CD8-positive, alpha-beta T cell (primary cell): ENCODE measurements at regions of chr20 and their contacts with region 1.

Region 1: DNA sequence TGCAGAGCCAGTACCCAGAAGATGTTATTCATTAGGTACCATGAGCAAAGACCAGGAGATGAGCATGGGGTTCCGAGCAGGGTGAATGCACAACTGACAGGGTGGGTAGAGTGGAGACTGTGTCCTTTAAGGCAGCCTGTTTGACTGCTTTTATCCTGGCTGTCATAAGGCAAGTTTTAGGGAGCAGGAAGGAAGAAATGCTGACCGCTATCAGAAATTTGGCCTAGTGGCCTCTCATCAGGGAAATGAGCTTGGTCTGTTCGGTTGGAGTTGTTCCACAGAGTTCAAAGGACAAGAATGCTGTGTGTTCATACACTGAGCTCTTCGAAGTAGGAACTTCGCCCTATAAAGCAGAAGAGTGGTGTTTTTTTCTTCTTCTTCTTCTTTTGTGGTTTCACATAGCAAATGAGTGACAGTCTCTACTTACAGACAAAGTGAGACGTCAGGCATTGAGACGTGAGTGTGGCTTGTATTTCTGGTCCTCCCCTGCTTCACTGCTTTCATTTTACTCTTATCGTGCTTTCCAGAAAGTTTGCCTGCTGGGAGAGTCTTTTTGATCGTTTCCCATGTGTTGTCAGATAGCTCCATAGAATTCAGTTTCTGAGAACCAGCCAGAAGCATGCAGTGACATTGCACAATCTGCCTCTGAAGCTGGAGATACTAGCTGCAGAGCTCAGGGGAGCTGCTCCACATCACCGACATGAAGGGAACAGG is at the start of gene CASS4:
- DNase-seq: peak in 6 of 9 experiments; percentile 39 to 82 (median 61)
- ATAC-seq: peak; percentile 80
- H3K4me3 ChIP-seq: peak within 1 kb of the TSS; percentile 58 to 74
- H3K4me3 Mint-ChIP-seq: peak within 1 kb of the TSS; percentile 93
- H3K27ac ChIP-seq: peak within 1 kb of the TSS; percentile 71 to 80
- H3K27ac Mint-ChIP-seq: peak within 1 kb of the TSS; percentile 98
- H3K4me1 ChIP-seq: peaks cover 56% of the 10 kb centered on the region
- H3K4me1 Mint-ChIP-seq: peaks cover 50% of the 10 kb centered on the region
- H3K27me3 ChIP-seq: no peaks in the 10 kb centered on the region
- H3K27me3 Mint-ChIP-seq: no peaks in the 10 kb centered on the region
- CTCF ChIP-seq: no peak
- total RNA-seq, gene CASS4: 23.5 to 26.0 TPM

Region 2: DNA sequence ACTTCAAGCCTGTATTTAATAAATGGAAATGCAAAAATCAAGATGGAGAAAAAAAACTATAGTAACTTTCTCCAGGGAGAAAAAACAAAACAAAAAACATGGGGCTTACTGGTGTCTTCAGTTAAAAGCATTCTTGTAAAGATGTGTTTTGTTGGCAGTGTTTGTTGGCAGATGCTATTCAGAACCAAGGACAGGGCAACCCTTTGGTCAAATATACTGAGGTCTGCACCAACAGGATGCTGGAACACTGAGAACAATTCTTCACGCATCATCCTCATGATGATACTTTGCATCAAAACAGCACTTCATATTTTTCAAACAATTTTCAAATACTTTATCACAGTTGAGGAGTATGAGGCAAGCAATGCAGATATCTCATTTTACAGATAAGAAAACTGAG is 342.9 kb before region 1 on chr20:
- CTCF ChIA-PET with region 1: no interaction called
- POLR2A ChIA-PET with region 1: no interaction called
- intact Hi-C with region 1: no loop called
- DNase-seq: no peak
- ATAC-seq: no peak
- H3K4me3 ChIP-seq: no peak overlapping the region
- H3K4me3 Mint-ChIP-seq: no peak overlapping the region
- H3K27ac ChIP-seq: no peak overlapping the region
- H3K27ac Mint-ChIP-seq: no peak overlapping the region
- H3K4me1 ChIP-seq: no peaks in the 10 kb centered on the region
- H3K4me1 Mint-ChIP-seq: no peaks in the 10 kb centered on the region
- H3K27me3 ChIP-seq: no peaks in the 10 kb centered on the region
- H3K27me3 Mint-ChIP-seq: no peaks in the 10 kb centered on the region
- CTCF ChIP-seq: no peak

Region 3: GRCh38 chr20:56392282-56393137 is 19.4 kb before region 1 on chr20 and contains the start of gene CSTF1:
- CTCF ChIA-PET with region 1: interaction called, 9 read pairs
- POLR2A ChIA-PET with region 1: interaction called, 14 read pairs
- intact Hi-C with region 1: loop called in 1 of 2 experiments (anchors 2 kb)
- DNase-seq: peak; percentile 98 to 99 (median 99)
- ATAC-seq: peak; percentile 84
- H3K4me3 ChIP-seq: peak within 1 kb of the TSS; percentile 91
- H3K4me3 Mint-ChIP-seq: no peak within 1 kb of the TSS
- H3K27ac ChIP-seq: peak within 1 kb of the TSS; percentile 95 to 97
- H3K27ac Mint-ChIP-seq: no peak within 1 kb of the TSS
- H3K4me1 ChIP-seq: peaks cover 17% of the 10 kb centered on the region
- H3K4me1 Mint-ChIP-seq: peaks cover 27% of the 10 kb centered on the region
- H3K27me3 ChIP-seq: no peaks in the 10 kb centered on the region
- H3K27me3 Mint-ChIP-seq: no peaks in the 10 kb centered on the region
- CTCF ChIP-seq: no peak
- total RNA-seq, gene CSTF1: 20.7 to 26.0 TPM

Region 4: DNA sequence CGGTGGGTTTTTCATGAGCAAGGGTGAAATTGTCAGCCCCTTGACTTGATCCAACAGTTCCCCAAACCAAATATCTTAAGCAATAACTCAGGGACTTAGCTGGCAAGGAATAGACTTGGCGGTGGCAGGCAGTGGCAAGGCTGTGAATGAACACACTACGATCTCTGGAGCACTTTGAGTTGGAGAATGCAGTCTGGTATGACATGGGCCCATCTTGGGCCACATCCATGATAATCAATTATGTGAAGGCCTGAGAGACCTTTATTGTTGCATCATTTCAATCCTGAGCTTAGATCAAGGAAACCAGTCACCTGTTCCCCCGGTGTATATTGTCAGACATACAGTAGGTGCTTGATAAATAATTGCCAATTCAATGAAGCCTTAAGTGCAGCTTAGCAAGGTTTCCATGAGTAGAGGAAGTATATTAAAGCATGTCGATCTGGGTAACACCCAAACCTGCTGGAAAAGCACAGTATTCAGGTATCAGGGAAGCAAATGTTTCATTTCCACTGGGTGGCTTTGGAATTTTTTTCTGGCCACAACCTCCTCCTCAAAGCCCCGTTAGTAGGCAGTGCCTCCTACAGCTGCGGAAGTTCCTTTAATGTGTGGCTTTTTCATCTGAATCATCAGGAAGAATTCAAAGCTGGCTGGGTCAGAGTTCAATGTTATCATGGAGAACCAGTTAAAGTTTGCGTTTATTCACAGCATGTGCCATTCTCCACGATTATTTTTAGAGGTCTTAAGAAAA is 10.3 kb after region 1 on chr20:
- CTCF ChIA-PET with region 1: interaction called, 8 read pairs
- POLR2A ChIA-PET with region 1: interaction called, 19 read pairs
- intact Hi-C with region 1: no loop called
- DNase-seq: peak in 1 of 9 experiments; percentile 34
- ATAC-seq: no peak
- H3K4me3 ChIP-seq: no peak overlapping the region
- H3K4me3 Mint-ChIP-seq: peak overlapping the region; percentile 46
- H3K27ac ChIP-seq: no peak overlapping the region
- H3K27ac Mint-ChIP-seq: peak overlapping the region; percentile 56
- H3K4me1 ChIP-seq: peaks cover 58% of the 10 kb centered on the region
- H3K4me1 Mint-ChIP-seq: peaks cover 63% of the 10 kb centered on the region
- H3K27me3 ChIP-seq: no peaks in the 10 kb centered on the region
- H3K27me3 Mint-ChIP-seq: no peaks in the 10 kb centered on the region
- CTCF ChIP-seq: no peak

Region 5: DNA sequence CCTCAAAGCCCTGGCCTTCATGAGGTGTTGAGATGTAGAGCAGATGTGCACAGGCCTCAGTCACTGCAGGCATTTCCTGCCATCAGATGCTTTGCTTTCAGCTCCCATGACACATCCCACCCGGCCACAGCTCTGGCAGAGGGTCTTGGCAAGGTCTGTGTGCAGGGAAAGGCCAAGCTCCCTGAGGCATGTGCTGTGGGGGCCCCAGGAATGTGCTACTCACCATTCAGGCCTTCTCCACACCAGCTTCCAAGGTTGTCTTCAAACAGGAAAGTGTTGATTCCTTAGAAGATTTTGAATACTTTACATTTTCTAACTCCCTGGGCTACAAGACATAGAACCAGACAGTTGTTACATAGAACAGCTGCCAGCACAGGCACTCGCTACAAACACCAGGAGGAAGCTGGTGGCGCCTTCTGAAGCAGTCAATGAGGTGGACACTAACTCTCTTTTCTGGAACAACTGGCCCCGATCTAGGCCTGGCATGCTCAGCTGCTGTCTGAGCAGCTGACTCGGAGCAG is 27.9 kb after region 1 on chr20:
- CTCF ChIA-PET with region 1: interaction called, 3 read pairs
- POLR2A ChIA-PET with region 1: interaction called, 10 read pairs
- intact Hi-C with region 1: no loop called
- DNase-seq: peak in 3 of 9 experiments; percentile 23 to 54 (median 48)
- ATAC-seq: peak; percentile 43
- H3K4me3 ChIP-seq: no peak overlapping the region
- H3K4me3 Mint-ChIP-seq: peak overlapping the region; percentile 60
- H3K27ac ChIP-seq: peak overlapping the region; percentile 16 to 39
- H3K27ac Mint-ChIP-seq: peak overlapping the region; percentile 83
- H3K4me1 ChIP-seq: peaks cover 52% of the 10 kb centered on the region
- H3K4me1 Mint-ChIP-seq: peaks cover 61% of the 10 kb centered on the region
- H3K27me3 ChIP-seq: no peaks in the 10 kb centered on the region
- H3K27me3 Mint-ChIP-seq: no peaks in the 10 kb centered on the region
- CTCF ChIP-seq: no peak

Region 6: GRCh38 chr20:57718490-57719271 is 1306.8 kb after region 1 on chr20:
- CTCF ChIA-PET with region 1: no interaction called
- POLR2A ChIA-PET with region 1: no interaction called
- intact Hi-C with region 1: loop called in 1 of 2 experiments (anchors 10 kb)
- DNase-seq: peak; percentile 78 to 96 (median 90)
- ATAC-seq: peak; percentile 97
- H3K4me3 ChIP-seq: peak overlapping the region; percentile 37 to 55
- H3K4me3 Mint-ChIP-seq: peak overlapping the region; percentile 69
- H3K27ac ChIP-seq: no peak overlapping the region
- H3K27ac Mint-ChIP-seq: peak overlapping the region; percentile 41
- H3K4me1 ChIP-seq: peaks cover 11% of the 10 kb centered on the region
- H3K4me1 Mint-ChIP-seq: peaks cover 11% of the 10 kb centered on the region
- H3K27me3 ChIP-seq: peaks cover 0 to 2% of the 10 kb centered on the region in 2 experiments
- H3K27me3 Mint-ChIP-seq: peaks cover 4% of the 10 kb centered on the region
- CTCF ChIP-seq: no peak